T-cell (primary cell): ENCODE measurements at regions of chr1 and their contacts with region 1.

Region 1: DNA sequence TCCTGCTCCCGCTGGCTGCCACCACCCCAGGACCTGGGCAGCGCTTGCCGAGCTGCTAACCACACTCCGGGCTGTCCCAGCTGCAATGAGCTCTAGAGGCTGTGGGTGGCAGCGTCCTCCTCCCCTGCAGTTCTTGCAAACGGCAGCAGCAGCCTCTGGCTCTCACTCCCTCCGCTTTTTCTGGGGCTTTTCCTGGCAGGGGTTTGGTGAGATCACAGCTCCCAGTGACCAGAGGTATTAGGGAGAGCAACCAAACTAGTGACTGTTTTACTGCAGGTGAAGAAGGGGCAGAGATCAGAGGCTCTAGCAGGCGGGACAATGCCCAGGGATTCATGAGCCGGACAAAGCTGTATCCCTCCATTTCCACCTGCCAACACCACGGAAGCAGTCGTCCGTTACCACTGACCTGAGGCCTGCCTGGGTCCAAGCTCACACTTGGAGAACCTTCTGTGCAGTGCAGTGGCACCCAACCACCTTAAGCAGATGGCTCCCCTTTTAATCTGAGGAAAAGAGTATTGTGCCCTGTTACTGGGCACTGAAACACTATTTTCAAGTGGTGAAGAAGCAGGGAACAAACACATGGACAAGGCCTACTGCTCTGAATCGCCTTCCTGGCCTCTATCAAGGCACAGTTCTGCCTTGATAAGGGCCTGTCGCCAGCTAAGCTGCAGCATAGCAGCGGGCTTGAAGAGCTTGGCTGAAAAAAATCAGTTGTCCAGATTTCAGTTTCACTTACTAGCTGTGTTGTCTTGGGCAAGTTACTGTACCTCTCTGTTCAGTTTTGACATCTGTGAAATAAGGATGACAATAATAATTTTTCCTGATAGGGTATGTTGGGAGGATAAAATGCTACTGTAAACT is at the start of gene F5:
- DNase-seq: peak; percentile 46 to 82 (median 71)
- ATAC-seq: peak; percentile 98 to 100 (median 98)
- H3K4me3 ChIP-seq: peak within 1 kb of the TSS; percentile 25 to 52
- H3K4me3 Mint-ChIP-seq: peak within 1 kb of the TSS; percentile 84 to 87 (median 87)
- H3K27ac ChIP-seq: no peak within 1 kb of the TSS
- H3K27ac Mint-ChIP-seq: peak within 1 kb of the TSS; percentile 79 to 88
- H3K4me1 ChIP-seq: peaks cover 17 to 20% of the 10 kb centered on the region in 2 experiments
- H3K4me1 Mint-ChIP-seq: peaks cover 27 to 56% (median 42%) of the 10 kb centered on the region in 3 donors
- H3K27me3 ChIP-seq: peaks cover 0 to 11% of the 10 kb centered on the region in 2 experiments
- H3K27me3 Mint-ChIP-seq: peaks cover 0 to 8% of the 10 kb centered on the region in 2 donors
- total RNA-seq, gene F5: 4.2 to 9.7 (median 8.5) TPM

Region 2: GRCh38 chr1:169414952-169415351 is 171.7 kb before region 1 on chr1:
- CTCF ChIA-PET with region 1: no interaction called
- POLR2A ChIA-PET with region 1: no interaction called
- DNase-seq: no peak
- ATAC-seq: no peak
- H3K4me3 ChIP-seq: no peak overlapping the region
- H3K4me3 Mint-ChIP-seq: no peak overlapping the region
- H3K27ac ChIP-seq: no peak overlapping the region
- H3K27ac Mint-ChIP-seq: no peak overlapping the region
- H3K4me1 ChIP-seq: no peaks in the 10 kb centered on the region
- H3K4me1 Mint-ChIP-seq: no peaks in the 10 kb centered on the region
- H3K27me3 ChIP-seq: peaks cover 0 to 3% of the 10 kb centered on the region in 2 experiments
- H3K27me3 Mint-ChIP-seq: peaks cover 4% of the 10 kb centered on the region in 2 donors

Region 3: DNA sequence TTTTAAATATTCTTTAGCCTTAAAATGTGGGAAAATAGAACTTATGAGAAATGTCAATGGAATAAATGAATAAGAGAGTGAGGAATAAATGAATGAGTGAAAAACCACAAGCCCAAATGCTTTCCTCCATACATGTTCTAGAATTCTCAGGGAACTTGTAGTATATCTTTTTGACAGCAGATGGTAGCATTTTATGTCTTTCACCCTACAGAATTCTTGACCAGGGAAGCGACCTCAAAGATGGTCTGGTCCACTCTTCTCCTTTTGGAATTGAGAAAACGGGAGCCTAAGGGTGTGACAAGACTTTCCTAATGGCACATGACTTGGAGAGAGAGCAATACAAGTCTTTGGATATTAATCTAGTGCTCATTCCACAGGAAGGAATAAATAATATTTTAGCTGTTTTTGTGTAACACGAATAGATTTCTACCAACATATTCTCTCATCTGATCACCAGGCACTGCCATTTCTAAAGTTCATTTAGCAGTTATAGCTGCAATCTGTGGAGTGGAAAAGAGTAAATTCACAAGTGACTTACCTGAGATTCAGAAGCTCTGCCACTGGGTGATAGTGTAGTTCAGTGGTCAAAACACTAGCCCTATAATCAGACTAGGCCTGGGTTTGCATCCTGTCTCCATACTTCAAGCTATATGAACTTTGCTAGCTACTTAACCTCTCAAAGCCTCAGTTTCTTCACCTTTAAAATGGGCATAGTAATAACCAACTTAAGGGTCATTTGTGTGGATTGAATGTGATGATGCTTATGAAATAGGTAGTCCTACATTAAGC is 14.7 kb after region 1 on chr1:
- CTCF ChIA-PET with region 1: interaction called, 21 to 23 read pairs
- POLR2A ChIA-PET with region 1: interaction called in 1 of 2 experiments, 3 read pairs
- DNase-seq: peak in 2 of 35 experiments; percentile 7 to 61
- ATAC-seq: no peak
- H3K4me3 ChIP-seq: no peak overlapping the region
- H3K4me3 Mint-ChIP-seq: peak overlapping the region in 1 of 3 donors; percentile 59
- H3K27ac ChIP-seq: peak overlapping the region; percentile 18
- H3K27ac Mint-ChIP-seq: peak overlapping the region; percentile 84 to 91
- H3K4me1 ChIP-seq: peaks cover 35 to 47% of the 10 kb centered on the region in 2 experiments
- H3K4me1 Mint-ChIP-seq: peaks cover 54 to 57% (median 55%) of the 10 kb centered on the region in 3 donors
- H3K27me3 ChIP-seq: no peaks in the 10 kb centered on the region
- H3K27me3 Mint-ChIP-seq: no peaks in the 10 kb centered on the region

Region 4: DNA sequence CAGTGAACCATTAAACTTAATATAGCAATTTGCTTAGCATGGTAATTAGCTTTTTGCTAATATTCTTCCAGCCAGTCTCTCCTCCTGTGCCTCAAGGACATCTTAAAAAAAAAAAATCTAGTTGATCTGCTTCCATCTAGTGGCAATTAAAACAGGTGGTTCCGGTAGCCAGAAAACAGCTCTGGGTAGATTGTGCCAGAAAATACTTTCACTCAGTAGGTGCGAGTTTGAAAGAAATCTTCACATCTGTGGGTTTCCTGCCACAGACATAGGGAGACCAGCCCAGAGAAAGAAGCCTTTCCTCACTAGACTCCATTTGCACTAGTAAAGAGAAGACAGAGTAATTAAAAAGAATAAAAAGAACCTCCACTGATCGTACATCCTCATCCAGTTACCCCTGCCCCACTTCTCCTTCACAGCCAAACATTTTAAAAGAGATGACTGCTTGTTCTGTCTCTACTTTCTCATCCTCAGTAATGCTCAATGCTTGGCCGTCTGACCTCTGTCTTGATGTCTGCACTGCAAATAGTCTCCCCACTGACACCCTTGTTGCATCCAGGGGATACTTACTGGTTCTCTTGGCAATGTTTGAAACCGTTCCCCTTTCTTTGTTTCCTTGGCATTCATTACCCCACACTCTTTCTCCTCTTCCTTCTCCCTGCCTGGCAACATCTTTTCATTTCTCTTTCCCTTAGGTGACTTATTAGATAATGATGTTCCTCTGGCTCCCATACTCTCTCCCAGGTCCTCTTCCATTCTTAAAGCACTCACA is 107.9 kb after region 1 on chr1:
- CTCF ChIA-PET with region 1: interaction called, 4 to 22 read pairs
- POLR2A ChIA-PET with region 1: interaction called in 1 of 2 experiments, 3 read pairs
- DNase-seq: peak in 31 of 35 experiments; percentile 11 to 80 (median 50)
- ATAC-seq: peak; percentile 62 to 70 (median 64)
- H3K4me3 ChIP-seq: peak overlapping the region in 1 of 2 donors; percentile 15
- H3K4me3 Mint-ChIP-seq: peak overlapping the region; percentile 32 to 91 (median 52)
- H3K27ac ChIP-seq: peak overlapping the region; percentile 85
- H3K27ac Mint-ChIP-seq: peak overlapping the region in 1 of 2 donors; percentile 93
- H3K4me1 ChIP-seq: peaks cover 81 to 91% of the 10 kb centered on the region in 2 experiments
- H3K4me1 Mint-ChIP-seq: peaks cover 17 to 98% (median 97%) of the 10 kb centered on the region in 3 donors
- H3K27me3 ChIP-seq: no peaks in the 10 kb centered on the region
- H3K27me3 Mint-ChIP-seq: no peaks in the 10 kb centered on the region

Region 5: DNA sequence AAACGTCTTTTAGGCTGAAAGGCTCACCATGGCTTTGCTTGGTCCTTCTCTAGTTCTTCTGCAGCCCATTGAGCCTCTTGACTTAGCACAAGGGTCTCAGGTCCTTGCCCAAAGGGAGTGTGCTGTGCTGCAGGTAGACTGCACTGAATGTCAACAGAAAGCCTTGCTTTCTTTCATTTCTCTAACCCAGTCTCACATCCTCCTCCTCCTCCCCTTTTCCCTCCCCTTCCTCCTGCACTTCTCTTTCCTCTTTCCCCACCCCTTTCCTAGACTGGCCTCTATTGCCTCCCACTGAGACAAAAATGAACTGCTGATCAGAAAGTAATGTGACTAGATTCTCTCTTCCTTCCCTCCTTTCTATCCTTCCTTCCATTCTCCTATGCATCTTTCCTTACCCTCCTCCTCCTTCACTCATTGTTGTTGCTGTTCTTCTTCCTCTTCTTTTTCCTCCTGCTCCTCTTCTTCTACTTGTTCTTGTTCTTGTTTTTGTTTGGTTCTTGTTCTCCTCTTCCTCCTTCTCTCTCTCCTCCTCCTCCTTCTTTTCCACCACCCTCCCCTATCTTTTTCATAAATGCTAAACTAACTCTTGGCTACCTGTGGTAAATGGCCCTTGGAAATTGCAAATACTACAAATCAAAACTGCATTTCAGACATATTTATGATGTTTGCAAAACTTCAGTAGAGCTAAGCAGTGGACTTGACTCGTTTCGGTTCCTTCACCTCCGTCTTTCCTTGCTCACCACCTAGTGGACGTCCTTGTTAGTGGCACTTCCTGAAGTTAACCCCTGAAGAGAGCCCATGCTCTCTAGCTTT is 125.0 kb after region 1 on chr1 and contains the start of gene SELL:
- CTCF ChIA-PET with region 1: interaction called, 16 to 51 read pairs
- POLR2A ChIA-PET with region 1: interaction called in 1 of 2 experiments, 6 read pairs
- DNase-seq: peak; percentile 43 to 89 (median 73)
- ATAC-seq: peak; percentile 76 to 81 (median 78)
- H3K4me3 ChIP-seq: peak within 1 kb of the TSS; percentile 59 to 76
- H3K4me3 Mint-ChIP-seq: peak within 1 kb of the TSS; percentile 88 to 98 (median 91)
- H3K27ac ChIP-seq: peak within 1 kb of the TSS; percentile 50
- H3K27ac Mint-ChIP-seq: peak within 1 kb of the TSS; percentile 99 to 100
- H3K4me1 ChIP-seq: peaks cover 4 to 16% of the 10 kb centered on the region in 2 experiments
- H3K4me1 Mint-ChIP-seq: peaks cover 19 to 35% (median 29%) of the 10 kb centered on the region in 3 donors
- H3K27me3 ChIP-seq: no peaks in the 10 kb centered on the region
- H3K27me3 Mint-ChIP-seq: peaks cover 3% of the 10 kb centered on the region in 2 donors
- total RNA-seq, gene SELL: 305 to 461 (median 336) TPM

Region 6: DNA sequence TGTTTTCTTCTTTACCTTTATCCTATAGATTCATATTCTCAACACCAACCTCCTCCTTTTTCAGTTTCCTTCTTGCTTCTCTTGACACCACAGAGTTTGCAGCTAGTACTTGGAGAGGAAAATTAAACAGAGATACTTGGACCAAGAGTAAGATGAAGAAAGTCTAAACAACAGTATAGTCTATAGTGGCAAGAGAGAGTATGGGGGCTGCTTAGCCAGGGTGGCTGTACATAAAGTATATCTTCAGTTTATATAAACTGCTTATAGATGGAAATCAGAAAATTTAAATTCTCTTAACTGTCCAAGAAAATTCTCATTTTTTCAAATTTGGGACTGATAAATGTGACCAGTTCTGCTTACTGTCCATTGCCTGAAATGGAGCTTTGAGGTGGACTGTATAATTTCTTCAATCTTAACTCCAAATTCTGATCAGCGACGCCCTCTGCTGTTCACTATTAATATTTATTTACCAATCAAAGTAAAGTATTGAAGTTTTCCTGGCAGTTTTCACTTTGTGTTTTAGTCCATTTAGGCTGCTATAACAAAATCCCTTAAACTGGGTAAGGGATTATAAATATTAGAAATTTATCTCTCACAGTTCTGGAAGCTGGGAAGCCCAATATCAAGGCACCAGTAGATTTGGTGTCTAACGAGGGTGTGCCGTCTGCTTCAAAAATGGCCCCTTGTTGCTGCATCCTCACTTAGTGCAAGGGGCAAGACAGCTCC is 222.9 kb after region 1 on chr1:
- CTCF ChIA-PET with region 1: interaction called, 10 to 11 read pairs
- POLR2A ChIA-PET with region 1: no interaction called
- DNase-seq: peak in 11 of 35 experiments; percentile 3 to 65 (median 7)
- ATAC-seq: no peak
- H3K4me3 ChIP-seq: no peak overlapping the region
- H3K4me3 Mint-ChIP-seq: no peak overlapping the region
- H3K27ac ChIP-seq: no peak overlapping the region
- H3K27ac Mint-ChIP-seq: no peak overlapping the region
- H3K4me1 ChIP-seq: no peaks in the 10 kb centered on the region
- H3K4me1 Mint-ChIP-seq: peaks cover 0 to 2% (median 0%) of the 10 kb centered on the region in 3 donors
- H3K27me3 ChIP-seq: no peaks in the 10 kb centered on the region
- H3K27me3 Mint-ChIP-seq: no peaks in the 10 kb centered on the region